PC-9 (cell line): ENCODE measurements at regions of chr19 and their contacts with region 1.

Region 1: DNA sequence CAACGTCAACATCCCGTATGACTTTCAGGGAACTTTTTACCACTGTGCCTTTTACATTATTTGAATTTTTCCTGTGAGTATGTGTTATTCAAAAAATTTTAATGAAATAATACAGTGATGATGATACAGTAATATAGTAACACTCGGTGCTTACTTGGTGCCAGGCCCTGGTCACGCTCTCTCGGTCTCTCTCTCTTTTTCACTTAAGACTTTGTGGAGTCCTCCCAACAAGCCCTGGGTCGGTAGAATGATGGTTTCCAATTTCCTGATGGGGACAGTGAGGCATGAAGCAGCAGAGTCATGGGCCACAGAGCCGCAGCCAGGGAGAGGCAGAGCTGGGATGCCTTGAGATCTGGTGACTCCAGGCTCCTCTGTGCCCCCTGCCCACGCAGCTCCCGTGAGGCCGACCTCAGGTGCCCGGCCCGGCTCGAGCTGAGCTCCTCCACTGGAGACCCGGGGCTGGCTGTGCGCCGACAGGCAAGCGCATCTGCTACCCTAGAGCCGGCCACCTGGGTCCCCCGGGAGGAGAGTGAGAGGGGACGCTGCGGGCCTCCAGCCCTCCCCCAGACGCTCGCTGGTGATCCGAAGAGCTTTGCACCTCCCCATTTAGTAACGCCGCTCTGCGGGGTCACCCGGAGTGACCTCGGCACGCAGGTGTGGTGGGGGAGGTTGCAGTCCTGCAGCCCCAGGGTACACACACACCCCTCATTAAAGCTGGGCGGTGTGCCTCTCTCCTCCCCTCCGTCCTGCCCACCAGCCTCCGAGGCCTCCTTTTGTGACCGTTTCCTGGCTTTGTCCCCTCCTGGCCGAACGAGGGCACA is 4.4 kb upstream of the SBK3 start:
- DNase-seq: peak; percentile 89 to 94
- H3K4me3 ChIP-seq: peak overlapping the region; percentile 54
- H3K27ac ChIP-seq: peak overlapping the region; percentile 96
- H3K4me1 ChIP-seq: peaks cover 63% of the 10 kb centered on the region
- H3K27me3 ChIP-seq: no peaks in the 10 kb centered on the region
- CTCF ChIP-seq: no peak

Region 2: DNA sequence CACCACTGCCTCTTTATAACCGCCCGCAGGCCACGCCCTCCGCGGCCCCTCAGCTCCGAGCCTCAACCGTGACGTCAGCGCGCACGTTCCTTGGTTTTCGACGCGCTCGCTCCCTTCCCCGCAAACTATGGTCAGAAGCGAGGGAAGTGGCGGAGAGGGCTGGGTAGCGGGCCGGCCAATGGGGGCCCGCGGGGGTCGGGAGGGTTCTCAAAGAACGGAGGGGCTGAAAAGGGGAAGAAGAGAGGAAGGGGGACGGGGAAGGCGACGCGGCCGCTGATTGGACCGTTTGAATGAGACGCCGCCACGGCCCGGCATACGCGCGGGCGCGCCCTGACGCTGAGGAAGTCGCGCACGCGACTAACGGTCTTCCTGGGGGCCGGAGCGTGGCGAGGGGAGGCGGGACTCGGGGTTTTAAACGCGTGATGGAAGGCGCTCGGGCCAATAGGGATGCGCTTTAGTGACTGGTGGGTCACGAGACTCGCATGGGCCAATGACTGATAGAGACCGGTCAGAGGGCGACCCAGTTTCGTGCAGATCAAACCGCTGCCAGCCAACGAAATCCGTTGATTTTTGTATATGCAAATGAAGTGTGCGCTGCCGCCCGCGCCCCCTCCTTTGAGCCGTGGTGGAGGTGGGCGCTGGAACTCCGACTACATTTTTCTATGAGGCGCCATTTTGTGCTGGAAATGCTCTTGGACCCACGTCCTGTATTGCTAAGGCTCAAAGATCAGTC is 141.7 kb before region 1 on chr19:
- CTCF ChIA-PET with region 1: no interaction called
- POLR2A ChIA-PET with region 1: interaction called, 42 read pairs
- intact Hi-C with region 1: no loop called
- DNase-seq: peak; percentile 95 to 98
- H3K4me3 ChIP-seq: peak overlapping the region; percentile 63
- H3K27ac ChIP-seq: peak overlapping the region; percentile 86
- H3K4me1 ChIP-seq: peaks cover 21% of the 10 kb centered on the region
- H3K27me3 ChIP-seq: no peaks in the 10 kb centered on the region
- CTCF ChIP-seq: no peak

Region 3: GRCh38 chr19:55516878-55517620 is 32.7 kb before region 1 on chr19:
- CTCF ChIA-PET with region 1: interaction called, 9 read pairs
- POLR2A ChIA-PET with region 1: interaction called, 8 read pairs
- intact Hi-C with region 1: loop called (anchors 2 kb)
- DNase-seq: peak; percentile 83 to 97
- H3K4me3 ChIP-seq: peak overlapping the region; percentile 60; the same call in 1 of the 2 replicates
- H3K27ac ChIP-seq: no peak overlapping the region
- H3K4me1 ChIP-seq: no peaks in the 10 kb centered on the region
- H3K27me3 ChIP-seq: peaks cover 17% of the 10 kb centered on the region
- CTCF ChIP-seq: peak; percentile 94

Region 4: DNA sequence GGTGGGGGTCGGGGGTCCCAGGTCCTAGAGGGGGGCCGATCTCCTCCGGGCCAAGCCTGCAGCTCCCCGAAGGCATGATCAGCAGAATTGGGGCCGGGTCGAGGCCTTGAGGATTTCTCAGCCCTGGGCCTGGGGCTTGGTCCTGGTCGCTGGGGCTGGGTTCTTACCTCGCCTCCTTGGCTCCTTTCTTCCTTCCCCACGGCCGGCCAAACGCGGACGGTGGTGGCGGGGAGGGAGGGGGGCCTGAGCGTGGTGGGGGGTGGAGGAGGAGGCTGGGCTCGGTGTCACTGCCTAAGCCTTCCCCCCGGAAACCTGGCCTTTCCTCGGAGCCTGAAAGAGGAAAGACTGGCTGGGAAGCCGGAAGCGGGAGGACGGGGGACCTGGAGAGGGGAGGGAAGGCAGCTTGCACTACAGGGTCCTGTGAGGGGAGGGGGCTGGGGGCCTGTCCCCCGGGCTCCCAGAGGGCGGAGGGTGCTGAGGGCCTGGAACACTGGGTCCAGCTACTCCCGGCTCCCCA is 31.0 kb after region 1 on chr19 and contains the start of gene ZNF579:
- CTCF ChIA-PET with region 1: interaction called, 9 read pairs
- POLR2A ChIA-PET with region 1: interaction called, 6 read pairs
- intact Hi-C with region 1: loop called (anchors 1 kb)
- DNase-seq: peak; percentile 70 to 90
- H3K4me3 ChIP-seq: peak within 1 kb of the TSS; percentile 98
- H3K27ac ChIP-seq: peak within 1 kb of the TSS; percentile 62
- H3K4me1 ChIP-seq: 0 out of 2 replicates have a peak, but pooled peaks cover 3% of the 10 kb centered on the region
- H3K27me3 ChIP-seq: 0 out of 2 replicates have a peak, but pooled peaks cover 5% of the 10 kb centered on the region
- CTCF ChIP-seq: no peak
- total RNA-seq, gene ZNF579: 49.0 TPM in 2 replicates

Region 5: DNA sequence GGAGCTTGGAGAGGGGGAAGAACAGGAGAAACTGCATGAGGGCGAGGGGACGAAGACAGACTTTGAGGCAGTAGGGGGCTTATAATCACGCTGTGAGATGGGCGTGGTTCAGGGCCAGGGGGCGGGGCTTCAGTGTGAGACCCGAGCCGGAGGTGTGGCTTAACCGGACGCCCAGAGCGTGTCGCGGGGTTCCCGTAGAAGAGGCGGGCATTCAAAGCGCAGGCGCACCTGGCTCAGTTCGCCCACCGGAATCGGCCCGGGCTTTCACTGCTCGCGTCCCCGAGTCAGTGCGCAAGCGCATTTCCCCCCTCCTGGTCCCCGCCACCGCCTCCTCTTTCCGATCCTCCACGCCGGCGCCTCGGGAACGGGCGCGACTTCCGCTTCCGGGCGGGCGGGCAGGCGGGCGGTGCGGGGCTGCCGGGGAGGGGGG is 55.5 kb after region 1 on chr19:
- CTCF ChIA-PET with region 1: interaction called, 4 read pairs
- POLR2A ChIA-PET with region 1: interaction called, 8 read pairs
- intact Hi-C with region 1: loop called (anchors 1 kb)
- DNase-seq: peak; percentile 93 to 100
- H3K4me3 ChIP-seq: peak overlapping the region; percentile 79
- H3K27ac ChIP-seq: peak overlapping the region; percentile 66
- H3K4me1 ChIP-seq: peaks cover 29% of the 10 kb centered on the region
- H3K27me3 ChIP-seq: no peaks in the 10 kb centered on the region
- CTCF ChIP-seq: no peak

Region 6: DNA sequence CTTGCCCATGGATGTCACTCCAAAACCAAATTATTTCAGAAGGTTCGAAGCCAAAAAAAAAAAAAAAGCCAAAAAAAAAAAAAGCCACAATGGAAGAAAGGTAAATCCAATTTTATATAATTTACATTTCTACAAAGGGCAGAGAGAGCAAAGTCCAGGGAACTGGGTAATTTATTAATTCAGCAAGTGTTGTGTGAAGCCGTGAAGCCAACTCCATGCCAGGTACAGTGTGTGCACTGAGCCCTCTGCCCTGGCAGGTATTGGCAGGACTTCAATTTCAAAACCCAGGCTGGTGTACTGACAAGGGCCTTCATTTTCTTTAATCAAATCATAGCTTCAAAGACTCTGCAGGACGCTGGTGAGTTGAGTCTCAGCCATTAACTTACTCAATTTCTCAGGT is 203.7 kb after region 1 on chr19:
- CTCF ChIA-PET with region 1: no interaction called
- POLR2A ChIA-PET with region 1: no interaction called
- intact Hi-C with region 1: no loop called
- DNase-seq: no peak
- H3K4me3 ChIP-seq: no peak overlapping the region
- H3K27ac ChIP-seq: no peak overlapping the region
- H3K4me1 ChIP-seq: no peaks in the 10 kb centered on the region
- H3K27me3 ChIP-seq: peaks cover 100% of the 10 kb centered on the region
- CTCF ChIP-seq: no peak

Region 7: DNA sequence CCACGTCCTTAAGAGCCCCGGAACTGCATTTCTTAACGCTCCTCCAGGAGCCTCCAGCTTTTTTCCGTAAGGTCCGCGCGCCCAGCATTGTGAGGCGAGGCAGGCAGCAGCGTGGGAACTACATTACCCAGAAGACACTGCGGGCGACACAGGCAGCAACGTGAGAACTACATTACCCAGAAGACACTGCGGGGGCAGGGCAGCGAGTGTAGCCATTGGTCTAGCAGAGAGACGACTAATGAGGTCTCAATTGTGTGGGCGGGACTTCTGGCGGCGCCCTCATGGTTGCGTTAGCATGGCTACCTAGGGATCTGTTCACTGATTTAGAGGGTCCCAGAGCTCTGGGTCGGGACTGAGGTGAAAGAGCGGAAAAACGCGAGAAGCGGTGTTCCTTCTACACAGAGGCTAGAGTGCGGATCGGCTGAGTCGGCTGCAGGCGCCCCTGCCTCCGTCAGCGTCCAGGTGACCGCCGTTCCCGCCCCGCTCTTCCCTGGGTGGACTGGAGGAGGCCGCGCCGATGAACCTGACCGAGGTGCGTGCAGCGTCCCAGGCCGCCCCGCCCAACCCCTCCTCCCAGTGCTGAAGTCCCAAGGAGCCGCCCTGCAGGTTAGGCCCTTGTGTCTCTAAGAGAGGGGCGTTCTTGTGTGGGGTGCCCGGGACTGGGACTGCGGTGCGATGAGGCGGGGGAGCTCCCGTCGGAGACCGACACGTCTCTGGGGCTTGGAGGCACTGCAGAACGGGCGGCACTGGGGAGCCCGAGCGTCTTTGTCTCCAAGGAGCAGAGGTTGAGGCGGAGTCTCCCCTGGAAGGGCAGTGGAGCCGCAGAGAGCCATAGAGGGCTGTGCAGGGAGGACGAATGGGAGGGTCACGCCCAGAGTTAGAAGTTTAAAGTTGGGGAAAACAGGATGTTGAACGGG is 1885.6 kb after region 1 on chr19 and contains the start of gene ZNF749:
- CTCF ChIA-PET with region 1: interaction called, 11 read pairs
- POLR2A ChIA-PET with region 1: no interaction called
- intact Hi-C with region 1: no loop called
- DNase-seq: peak; percentile 97
- H3K4me3 ChIP-seq: peak within 1 kb of the TSS; percentile 81
- H3K27ac ChIP-seq: peak within 1 kb of the TSS; percentile 33
- H3K4me1 ChIP-seq: peaks cover 16% of the 10 kb centered on the region
- H3K27me3 ChIP-seq: no peaks in the 10 kb centered on the region
- CTCF ChIP-seq: no peak
- total RNA-seq, gene ZNF749: 17.9 and 19.4 TPM in 2 replicates